Activated CD4-positive, alpha-beta memory T cell treated with anti-CD3 and anti-CD28 coated beads for 36 hours (primary cell): ENCODE measurements at regions of chr19 and their contacts with region 1.

Region 1: DNA sequence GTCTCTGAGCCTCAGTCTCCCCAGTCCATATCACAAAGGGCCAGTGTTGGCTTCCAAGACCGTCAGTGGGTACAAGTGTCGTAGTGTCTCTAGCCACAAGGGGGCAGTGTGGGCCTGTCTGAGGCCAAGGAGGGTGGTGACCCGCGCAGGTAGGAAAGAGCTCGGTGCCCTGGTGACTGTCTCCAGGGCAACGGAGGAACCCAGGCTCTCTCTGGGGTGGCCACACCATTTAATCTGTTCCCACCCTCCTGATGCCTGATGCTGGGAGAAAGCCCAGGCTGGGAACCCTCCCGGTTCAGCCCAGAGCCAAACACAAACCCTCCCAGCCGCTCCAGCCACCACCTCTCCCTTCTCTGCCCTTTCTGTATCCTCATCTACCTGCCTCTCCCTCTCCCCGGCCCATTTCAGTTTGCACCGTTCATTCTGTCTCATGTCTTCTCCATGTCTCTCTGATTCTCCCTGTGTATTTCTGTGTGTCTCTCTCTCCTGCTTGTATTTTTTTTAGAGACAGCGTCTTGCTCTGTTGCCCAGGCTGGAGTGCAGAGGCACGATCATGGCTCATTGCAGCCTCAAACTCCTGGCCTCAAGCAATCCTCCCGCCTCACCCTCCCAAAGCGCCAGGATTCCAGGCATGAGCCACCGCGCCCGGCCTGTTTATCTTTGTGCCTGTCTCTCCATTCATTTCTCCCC is 17.5 kb upstream of the MEIS3 start:
- DNase-seq: peak; percentile 89
- H3K4me3 Mint-ChIP-seq: no peak overlapping the region
- H3K27ac Mint-ChIP-seq: no peak overlapping the region
- H3K4me1 Mint-ChIP-seq: peaks cover 15% of the 10 kb centered on the region
- H3K27me3 Mint-ChIP-seq: peaks cover 38% of the 10 kb centered on the region

Region 2: GRCh38 chr19:47447470-47448359 is 10.9 kb after region 1 on chr19:
- CTCF ChIA-PET with region 1: interaction called, 10 read pairs
- POLR2A ChIA-PET with region 1: interaction called, 3 read pairs
- intact Hi-C with region 1: no loop called
- DNase-seq: peak; percentile 80
- H3K4me3 Mint-ChIP-seq: peak overlapping the region; percentile 42
- H3K27ac Mint-ChIP-seq: no peak overlapping the region
- H3K4me1 Mint-ChIP-seq: peaks cover 39% of the 10 kb centered on the region
- H3K27me3 Mint-ChIP-seq: peaks cover 52% of the 10 kb centered on the region

Region 3: DNA sequence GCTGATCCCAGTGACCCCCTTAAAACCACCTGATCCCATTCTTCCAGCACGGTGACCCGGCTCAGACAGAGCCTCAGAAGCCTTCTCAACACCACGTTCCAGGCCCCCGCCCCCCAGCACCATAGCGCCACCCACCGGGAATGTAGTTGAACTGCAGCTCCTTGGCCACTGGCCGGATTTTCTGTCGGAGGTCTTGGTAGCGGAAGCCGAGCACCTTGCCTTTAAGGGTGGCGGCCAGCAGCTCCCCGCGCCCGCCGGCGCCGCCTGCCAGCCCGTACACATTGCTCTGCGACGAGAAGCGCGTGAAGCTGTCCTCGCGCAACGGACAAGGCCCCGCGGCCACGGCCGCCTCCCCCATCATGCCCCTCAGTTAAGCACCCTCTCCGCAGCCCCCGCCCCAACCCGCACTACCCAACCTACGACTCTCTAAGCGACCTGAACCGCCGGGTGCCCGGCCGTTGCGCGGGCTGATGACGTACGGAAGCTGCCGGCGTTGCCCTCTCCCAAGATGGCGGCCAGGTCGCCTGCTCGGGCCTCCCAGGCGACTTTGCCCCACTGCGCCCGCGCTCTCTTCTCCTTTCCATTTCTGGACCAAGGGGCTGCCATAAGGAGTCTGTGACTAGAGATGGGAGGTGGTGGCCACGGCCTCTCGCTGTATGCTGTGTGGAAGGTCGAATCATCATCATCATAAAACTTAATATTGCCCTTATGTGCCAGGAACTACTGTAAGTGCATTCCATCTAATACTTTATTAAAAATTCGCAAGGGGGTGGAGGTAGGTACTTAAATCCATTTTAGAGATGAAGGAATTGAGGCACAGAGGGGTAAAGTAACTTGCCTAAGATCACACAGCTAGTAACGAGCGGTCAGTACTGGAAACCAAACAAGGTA is 47.2 kb after region 1 on chr19 and contains the start of gene KPTN:
- CTCF ChIA-PET with region 1: interaction called, 71 read pairs
- POLR2A ChIA-PET with region 1: interaction called, 3 read pairs
- intact Hi-C with region 1: loop called (anchors 2 kb)
- DNase-seq: peak; percentile 94
- H3K4me3 Mint-ChIP-seq: peak within 1 kb of the TSS; percentile 95
- H3K27ac Mint-ChIP-seq: peak within 1 kb of the TSS; percentile 94
- H3K4me1 Mint-ChIP-seq: peaks cover 20% of the 10 kb centered on the region
- H3K27me3 Mint-ChIP-seq: no peaks in the 10 kb centered on the region
- total RNA-seq, gene KPTN: 7.0 to 9.2 TPM

Region 4: DNA sequence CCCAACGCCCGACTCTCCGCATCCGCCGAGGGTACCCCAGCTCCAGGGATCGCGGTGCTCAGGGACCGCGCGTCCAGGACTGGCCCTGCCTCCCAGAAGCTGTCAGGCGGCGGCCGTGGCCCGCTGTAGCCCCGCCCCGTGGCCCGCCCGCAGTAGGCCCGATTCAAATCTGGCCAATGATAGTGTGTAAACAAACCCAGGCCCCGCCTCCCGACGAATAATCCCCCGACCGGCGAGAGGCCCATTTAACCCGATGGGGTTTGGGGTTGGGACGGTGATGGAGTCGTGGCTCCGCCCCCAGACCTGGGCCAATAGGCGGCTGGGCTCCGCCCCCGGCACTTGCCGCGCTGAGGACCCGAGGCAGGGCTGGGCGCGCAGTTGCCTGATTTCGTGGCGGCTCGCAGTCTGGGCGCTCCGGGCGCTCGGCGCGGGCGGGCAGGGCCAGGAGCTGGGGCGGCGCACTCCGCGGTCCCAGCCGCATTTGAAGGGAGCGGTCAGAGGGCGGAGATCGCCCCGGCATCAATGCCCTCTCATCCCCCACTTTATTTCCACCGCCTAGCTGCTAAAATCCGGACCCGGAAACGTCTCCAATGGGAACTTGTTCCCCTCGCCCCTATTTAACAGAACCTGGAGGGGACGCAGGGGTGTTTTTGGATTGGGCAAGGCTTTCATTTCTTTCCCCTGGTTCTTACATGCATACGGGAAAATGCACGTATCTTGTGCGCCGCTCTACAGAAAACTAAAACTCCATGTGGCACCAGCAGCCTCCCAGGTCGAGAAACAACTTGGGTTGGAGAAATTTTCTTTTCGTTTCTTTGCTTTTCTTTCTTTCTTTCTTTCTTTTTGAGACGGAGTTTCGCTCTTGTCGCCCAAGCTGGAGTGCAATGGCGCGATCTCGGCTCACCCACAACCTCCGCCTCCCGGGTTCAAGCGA is 163.7 kb after region 1 on chr19:
- CTCF ChIA-PET with region 1: interaction called, 3 read pairs
- POLR2A ChIA-PET with region 1: no interaction called
- intact Hi-C with region 1: loop called (anchors 10 kb)
- DNase-seq: peak; percentile 100
- H3K4me3 Mint-ChIP-seq: peak overlapping the region; percentile 83
- H3K27ac Mint-ChIP-seq: peak overlapping the region; percentile 86
- H3K4me1 Mint-ChIP-seq: peaks cover 30% of the 10 kb centered on the region
- H3K27me3 Mint-ChIP-seq: no peaks in the 10 kb centered on the region

Region 5: DNA sequence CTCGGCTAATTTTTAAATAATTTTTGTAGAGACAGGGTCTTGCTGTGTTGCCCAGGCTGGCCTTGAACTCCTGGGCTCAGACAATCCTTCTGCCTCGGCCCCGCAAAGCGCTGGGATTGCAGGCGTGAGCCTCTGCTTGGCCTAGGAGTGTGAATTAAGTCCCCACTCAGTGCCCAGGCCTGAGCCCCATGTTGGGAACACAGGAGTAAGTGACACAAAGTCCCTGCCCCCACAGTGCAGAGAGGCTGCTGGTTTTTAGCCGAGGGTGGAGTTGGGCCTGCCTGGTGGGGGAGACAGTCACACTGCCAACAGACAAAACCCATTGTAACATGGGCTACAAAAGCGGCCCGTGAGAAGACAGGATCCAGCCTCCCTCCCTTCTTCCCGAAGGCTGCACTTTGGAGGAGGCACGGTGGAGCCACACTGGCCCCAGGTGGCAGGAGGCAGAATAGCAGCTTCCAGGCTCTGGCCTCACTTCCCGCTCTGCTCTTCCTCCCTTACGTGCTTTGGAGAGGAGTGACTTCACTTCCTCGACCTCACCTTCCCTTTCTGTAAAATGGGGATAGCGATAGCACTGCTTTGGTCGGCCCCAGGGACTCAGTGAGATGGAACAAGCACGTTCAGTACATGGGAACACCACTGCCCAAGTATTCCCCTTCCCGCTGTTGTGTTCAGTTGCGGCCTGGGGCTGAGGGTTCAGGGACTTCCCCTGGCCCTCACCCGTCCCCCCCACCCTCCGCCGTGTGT is 261.2 kb after region 1 on chr19:
- CTCF ChIA-PET with region 1: interaction called, 193 read pairs
- POLR2A ChIA-PET with region 1: no interaction called
- intact Hi-C with region 1: loop called (anchors 2 kb)
- DNase-seq: peak; percentile 74
- H3K4me3 Mint-ChIP-seq: no peak overlapping the region
- H3K27ac Mint-ChIP-seq: no peak overlapping the region
- H3K4me1 Mint-ChIP-seq: no peaks in the 10 kb centered on the region
- H3K27me3 Mint-ChIP-seq: no peaks in the 10 kb centered on the region

Region 6: DNA sequence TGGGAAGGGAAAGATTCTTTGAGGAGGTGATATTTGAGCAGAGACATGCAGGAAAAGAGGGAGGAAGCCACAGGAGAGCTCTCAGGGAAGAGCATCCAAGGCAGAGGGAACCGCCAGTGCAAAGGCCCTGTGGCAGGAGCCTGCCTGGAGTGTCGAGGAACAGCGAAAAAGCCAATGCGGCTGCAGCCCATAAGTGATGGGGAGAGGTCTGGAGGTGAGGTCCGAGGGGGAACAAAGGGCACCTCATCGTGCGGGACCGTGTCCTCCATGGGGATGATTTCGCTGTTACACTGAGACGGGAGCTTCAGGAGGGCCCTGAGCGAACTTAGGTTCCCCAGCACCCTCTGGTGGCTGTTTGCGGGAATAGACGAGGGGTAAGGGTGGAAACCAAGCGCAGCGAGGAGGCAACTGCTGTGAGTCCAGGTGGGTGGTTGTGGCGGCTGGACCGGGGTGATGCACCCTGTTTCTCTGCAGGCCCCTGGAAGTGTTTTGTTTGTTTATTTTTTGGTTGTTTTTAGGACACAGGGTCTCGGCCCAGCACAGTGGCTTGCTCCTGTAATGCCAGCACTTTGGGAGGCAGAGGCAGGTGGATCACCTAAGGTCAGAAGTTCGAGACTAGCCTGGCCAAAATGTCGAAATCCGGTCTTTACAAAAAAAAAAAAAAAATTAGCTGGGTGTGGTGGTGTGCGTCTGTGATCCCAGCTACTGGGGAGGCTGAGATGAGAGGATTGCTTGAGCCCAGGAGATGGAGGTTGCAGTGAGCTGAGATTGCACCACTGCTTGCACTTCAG is 270.5 kb after region 1 on chr19:
- CTCF ChIA-PET with region 1: interaction called, 193 read pairs
- POLR2A ChIA-PET with region 1: no interaction called
- intact Hi-C with region 1: loop called (anchors 1 kb)
- DNase-seq: peak; percentile 88
- H3K4me3 Mint-ChIP-seq: no peak overlapping the region
- H3K27ac Mint-ChIP-seq: no peak overlapping the region
- H3K4me1 Mint-ChIP-seq: no peaks in the 10 kb centered on the region
- H3K27me3 Mint-ChIP-seq: peaks cover 6% of the 10 kb centered on the region